ENCODE measurements at regions of chr14 and their contacts with region 1.

Region 1: GRCh38 chr14:22653012-22653621 is 9.0 kb upstream of the OR6J1 start:
- DNase-seq: peak; percentile 73
- ATAC-seq: peak; percentile 99
- H3K4me3 ChIP-seq: no peak overlapping the region
- H3K27ac ChIP-seq: no peak overlapping the region
- H3K4me1 ChIP-seq: peaks cover 2 to 6% of the 10 kb centered on the region in 2 experiments; a peak in 3 of 4 replicates
- H3K27me3 ChIP-seq: no peaks in the 10 kb centered on the region
- CTCF ChIP-seq: peak; percentile 87 to 94 (median 92)
- POLR2A ChIP-seq: no peak
- RAD21 ChIP-seq: peak; percentile 85

Region 2: DNA sequence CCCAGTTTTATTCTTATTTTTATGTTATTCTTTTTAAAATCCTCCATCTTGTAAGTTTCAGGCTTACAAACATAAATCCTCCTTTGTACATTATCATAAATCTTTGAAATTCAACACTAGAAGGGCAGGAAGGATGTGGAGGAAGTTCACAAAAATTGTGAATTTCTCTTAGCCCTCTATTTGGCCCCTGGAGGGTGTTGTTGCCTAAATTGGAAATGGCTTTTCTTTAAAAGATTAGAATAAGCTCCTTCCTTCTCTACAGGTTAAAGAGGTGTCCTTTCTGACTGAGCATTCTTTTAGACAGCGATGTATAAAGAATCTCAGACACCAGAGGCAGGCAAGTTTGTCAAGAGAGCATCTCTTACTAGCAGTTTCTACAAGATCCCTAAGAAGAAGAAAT is 587.8 kb before region 1 on chr14:
- CTCF ChIA-PET with region 1: no interaction called
- POLR2A ChIA-PET with region 1: no interaction called
- RAD21 ChIA-PET with region 1: no interaction called
- intact Hi-C with region 1: no loop called
- DNase-seq: no peak
- ATAC-seq: no peak
- H3K4me3 ChIP-seq: no peak overlapping the region
- H3K27ac ChIP-seq: no peak overlapping the region
- H3K4me1 ChIP-seq: no peaks in the 10 kb centered on the region
- H3K27me3 ChIP-seq: peaks cover 40% of the 10 kb centered on the region
- CTCF ChIP-seq: no peak
- POLR2A ChIP-seq: no peak
- RAD21 ChIP-seq: no peak

Region 3: DNA sequence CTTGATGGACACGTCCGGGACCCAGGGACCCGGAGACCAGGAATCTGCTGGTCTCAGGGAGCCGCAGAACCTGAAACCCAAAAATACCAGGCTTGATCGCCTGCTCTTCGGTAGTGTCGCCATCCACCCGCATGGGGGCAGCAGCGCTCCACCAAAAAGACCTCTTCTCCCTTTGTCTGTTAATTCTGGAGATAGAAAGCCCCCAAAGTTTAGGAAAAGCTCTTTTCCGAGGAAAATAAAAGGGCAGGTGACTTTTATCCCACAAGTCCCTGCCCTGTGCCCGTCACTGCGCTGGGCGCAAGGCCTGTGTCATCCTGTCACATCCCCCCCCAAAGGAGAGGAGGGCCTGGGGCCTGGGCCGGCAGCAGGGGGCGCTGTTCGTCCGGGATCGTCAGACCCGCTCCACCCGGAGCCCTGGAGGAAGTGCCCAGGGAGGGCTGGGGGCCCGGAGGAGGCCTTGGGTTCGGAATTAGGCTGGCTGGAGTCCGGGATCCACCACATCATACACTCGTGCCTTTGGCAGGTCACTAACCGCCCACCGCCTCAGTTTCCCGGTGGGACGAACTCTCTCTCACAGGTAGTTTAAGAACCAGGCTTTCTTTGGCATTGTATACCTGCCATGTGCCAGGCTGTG is 96.0 kb before region 1 on chr14:
- CTCF ChIA-PET with region 1: interaction called, 14 read pairs
- POLR2A ChIA-PET with region 1: interaction called, 6 read pairs
- RAD21 ChIA-PET with region 1: interaction called in 1 of 2 experiments, 3 read pairs
- intact Hi-C with region 1: loop called (anchors 1 kb)
- DNase-seq: peak; percentile 48
- ATAC-seq: peak; percentile 92
- H3K4me3 ChIP-seq: 0 out of 4 replicates have a peak overlapping the region, but pooled peaks of 1 of the 2 experiments have one; percentile 23
- H3K27ac ChIP-seq: no peak overlapping the region
- H3K4me1 ChIP-seq: peaks cover 5 to 24% of the 10 kb centered on the region in 2 experiments
- H3K27me3 ChIP-seq: no peaks in the 10 kb centered on the region
- CTCF ChIP-seq: peak; percentile 95 to 100 (median 99)
- POLR2A ChIP-seq: no peak
- RAD21 ChIP-seq: peak; percentile 96

Region 4: GRCh38 chr14:22589096-22589839 is 63.8 kb before region 1 on chr14 and contains the start of gene DAD1:
- CTCF ChIA-PET with region 1: interaction called, 22 read pairs
- POLR2A ChIA-PET with region 1: interaction called, 9 read pairs
- RAD21 ChIA-PET with region 1: interaction called in 1 of 2 experiments, 5 read pairs
- intact Hi-C with region 1: no loop called
- DNase-seq: peak; percentile 98
- ATAC-seq: peak; percentile 94
- H3K4me3 ChIP-seq: peak within 1 kb of the TSS; percentile 71 to 93
- H3K27ac ChIP-seq: peak within 1 kb of the TSS; percentile 69
- H3K4me1 ChIP-seq: peaks cover 10 to 22% of the 10 kb centered on the region in 2 experiments
- H3K27me3 ChIP-seq: 0 out of 2 replicates have a peak, but pooled peaks cover 6% of the 10 kb centered on the region
- CTCF ChIP-seq: no peak
- POLR2A ChIP-seq: peak; percentile 94
- RAD21 ChIP-seq: no peak
- total RNA-seq, gene DAD1: 162 TPM

Region 5: GRCh38 chr14:22852940-22853767 is 200.0 kb after region 1 on chr14:
- CTCF ChIA-PET with region 1: interaction called, 37 read pairs
- POLR2A ChIA-PET with region 1: interaction called, 5 read pairs
- RAD21 ChIA-PET with region 1: interaction called, 3 to 7 read pairs
- intact Hi-C with region 1: loop called (anchors 1 kb)
- DNase-seq: peak; percentile 63
- ATAC-seq: peak; percentile 91
- H3K4me3 ChIP-seq: peak overlapping the region; percentile 40 to 53
- H3K27ac ChIP-seq: peak overlapping the region; percentile 42; the same call in 1 of the 2 replicates
- H3K4me1 ChIP-seq: peaks cover 3 to 19% of the 10 kb centered on the region in 2 experiments; a peak in 2 of 4 replicates
- H3K27me3 ChIP-seq: no peaks in the 10 kb centered on the region
- CTCF ChIP-seq: peak; percentile 92 to 93 (median 92)
- POLR2A ChIP-seq: no peak
- RAD21 ChIP-seq: peak; percentile 96

Region 6: DNA sequence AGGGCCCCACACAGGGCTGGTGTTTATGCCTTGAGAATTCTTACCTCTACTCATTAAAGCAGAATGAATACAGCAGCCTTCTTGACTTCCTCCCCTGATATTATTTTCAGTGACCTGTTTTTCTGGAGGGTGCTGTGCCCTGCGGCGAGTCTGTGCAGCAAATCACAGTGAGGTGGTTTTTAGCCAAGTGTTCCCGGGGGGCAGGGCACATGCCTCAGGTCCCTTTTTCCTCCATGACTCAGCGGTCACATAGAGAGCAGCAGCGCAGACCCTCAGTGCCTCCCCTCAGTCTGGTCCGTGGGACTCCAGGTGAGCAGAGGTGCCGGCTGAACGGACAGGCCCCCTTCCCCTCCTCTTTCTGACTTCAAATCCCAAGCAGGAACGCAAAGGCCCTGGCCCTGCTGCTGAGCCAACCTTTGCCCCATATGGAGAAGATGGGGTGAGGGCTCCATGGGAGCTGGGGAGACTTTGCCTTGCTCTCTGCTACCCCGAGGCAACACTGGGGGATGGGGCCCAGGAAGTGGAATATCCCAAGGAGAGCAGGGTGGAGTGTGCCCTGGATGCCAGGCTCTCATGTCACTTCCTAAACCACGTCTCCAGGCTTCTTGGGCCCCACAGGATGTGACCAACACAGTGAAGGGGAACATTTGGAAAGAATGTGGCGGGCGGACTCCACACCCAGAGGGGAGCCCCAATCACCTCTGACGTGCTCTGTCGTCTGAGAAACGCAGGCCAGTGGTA is 1073.0 kb after region 1 on chr14:
- CTCF ChIA-PET with region 1: no interaction called
- POLR2A ChIA-PET with region 1: no interaction called
- RAD21 ChIA-PET with region 1: no interaction called
- intact Hi-C with region 1: no loop called
- DNase-seq: no peak
- ATAC-seq: no peak
- H3K4me3 ChIP-seq: no peak overlapping the region
- H3K27ac ChIP-seq: no peak overlapping the region
- H3K4me1 ChIP-seq: peaks cover 0 to 4% of the 10 kb centered on the region in 2 experiments; a peak in 1 of 4 replicates
- H3K27me3 ChIP-seq: no peaks in the 10 kb centered on the region
- CTCF ChIP-seq: no peak
- POLR2A ChIP-seq: no peak
- RAD21 ChIP-seq: no peak

Measured in HCT116 (cell line).